ENCODE measurements at regions of chr11 and their contacts with region 1.

Region 1: DNA sequence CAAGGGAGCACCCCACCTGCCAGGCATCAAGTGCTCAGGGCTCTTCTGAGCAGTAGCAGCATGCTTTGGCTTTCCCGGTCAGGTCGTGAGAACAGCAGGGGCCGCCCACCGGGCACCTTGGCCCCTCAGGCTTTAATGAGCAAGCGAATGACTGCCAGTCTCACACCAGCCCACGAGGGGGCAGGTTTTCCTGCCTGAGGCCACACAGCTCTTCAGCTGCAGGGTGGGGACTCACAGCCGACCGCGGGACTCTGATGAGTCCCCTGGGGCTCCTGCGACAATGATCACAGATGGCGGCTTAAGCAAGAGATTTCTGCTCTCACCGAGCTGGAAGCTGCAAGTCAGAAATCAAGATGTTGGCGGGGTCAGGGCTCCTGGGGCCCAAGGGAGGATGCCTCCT is 14.3 kb upstream of the FGF19 start:
- DNase-seq: peak; percentile 72 to 88
- H3K4me3 ChIP-seq: no peak overlapping the region
- H3K4me1 ChIP-seq: peaks cover 3% of the 10 kb centered on the region
- H3K27me3 ChIP-seq: no peaks in the 10 kb centered on the region

Region 2: GRCh38 chr11:69670158-69670845 is 47.8 kb before region 1 on chr11:
- in situ Hi-C with region 1: no loop called
- DNase-seq: peak; percentile 75 to 89
- H3K4me3 ChIP-seq: no peak overlapping the region
- H3K4me1 ChIP-seq: peaks cover 3% of the 10 kb centered on the region
- H3K27me3 ChIP-seq: no peaks in the 10 kb centered on the region

Region 3: GRCh38 chr11:69888483-69889076 is 170.4 kb after region 1 on chr11:
- in situ Hi-C with region 1: loop called (anchors 5 kb)
- DNase-seq: peak; percentile 39 to 86
- H3K4me3 ChIP-seq: no peak overlapping the region
- H3K4me1 ChIP-seq: peaks cover 6% of the 10 kb centered on the region
- H3K27me3 ChIP-seq: peaks cover 34% of the 10 kb centered on the region

Measured in HAP-1 (cell line).